ENCODE measurements at regions of chr22 and their contacts with region 1.

Region 1: GRCh38 chr22:18077639-18078328 is at the start of gene PEX26:
- DNase-seq: peak; percentile 98

Region 2: DNA sequence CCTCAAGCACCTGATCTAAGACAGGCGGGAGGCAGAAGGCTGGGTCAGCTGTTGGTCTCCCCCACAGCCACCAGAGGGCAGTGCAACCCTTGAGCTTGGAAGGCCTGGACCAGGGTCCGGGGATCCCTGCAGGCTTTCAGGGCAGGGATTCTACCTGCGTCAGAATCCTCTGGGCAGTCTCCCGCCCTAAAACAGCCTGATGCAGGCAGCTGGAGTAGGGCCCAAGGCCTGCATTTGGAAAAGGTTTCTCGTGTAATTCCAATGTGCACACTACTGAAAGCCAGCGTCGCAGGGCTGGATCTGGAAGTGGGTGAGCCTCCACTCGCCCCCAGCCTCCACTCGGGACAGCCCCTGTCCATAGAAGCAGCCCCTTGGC is 335.3 kb before region 1 on chr22:
- in situ Hi-C with region 1: no loop called
- DNase-seq: peak; percentile 68

Region 3: GRCh38 chr22:17807578-17808360 is 270.0 kb before region 1 on chr22:
- in situ Hi-C with region 1: no loop called
- DNase-seq: no peak

Region 4: DNA sequence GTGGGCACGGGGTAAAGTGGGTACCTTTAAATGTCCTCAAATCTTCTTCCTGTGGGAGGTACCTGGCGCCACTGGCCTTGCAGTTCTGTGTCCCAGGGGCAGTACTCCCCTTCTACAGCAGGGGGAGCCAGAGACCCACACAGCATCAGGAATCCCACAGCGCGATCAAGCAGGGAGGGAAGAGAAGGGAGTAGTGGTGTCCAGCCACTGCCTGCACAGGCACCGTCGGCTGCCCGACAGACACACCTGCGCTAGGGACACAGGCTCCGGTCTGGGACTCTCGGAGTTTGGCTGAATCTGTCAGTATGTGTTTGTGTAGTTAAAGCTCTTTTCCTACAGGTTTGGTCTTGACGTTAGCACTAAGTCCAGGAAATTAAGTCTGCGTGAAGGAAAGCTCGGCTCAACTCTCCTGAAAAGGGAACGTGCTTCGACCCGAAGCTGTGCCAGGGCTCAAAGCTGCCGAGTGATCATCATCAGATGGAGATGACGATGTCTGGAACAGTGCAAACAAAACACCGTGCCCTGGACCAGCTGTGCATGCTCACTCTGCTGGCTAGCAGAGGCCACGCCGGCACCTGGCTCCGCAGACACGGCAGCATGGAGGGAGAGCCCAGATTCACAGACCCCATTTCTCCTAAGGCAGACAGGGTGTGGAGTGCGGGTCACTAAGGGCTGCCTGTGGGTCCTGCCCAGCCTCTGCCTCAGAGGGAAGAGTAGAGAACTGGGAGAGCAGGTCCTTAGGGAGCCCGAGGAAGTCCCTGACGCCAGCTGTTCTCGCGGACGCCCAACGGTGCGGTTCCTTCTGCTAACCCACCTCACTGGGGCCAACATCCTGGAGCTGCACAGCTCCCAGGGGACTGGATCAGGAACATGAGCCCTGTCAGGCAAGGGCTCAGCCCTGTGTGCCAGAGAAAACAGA is 247.5 kb before region 1 on chr22:
- in situ Hi-C with region 1: loop called (anchors 10 kb)
- DNase-seq: peak; percentile 88

Region 5: GRCh38 chr22:18024276-18024947 is 53.4 kb before region 1 on chr22 and contains the start of gene MICAL3:
- in situ Hi-C with region 1: no loop called
- DNase-seq: peak; percentile 68

Region 6: DNA sequence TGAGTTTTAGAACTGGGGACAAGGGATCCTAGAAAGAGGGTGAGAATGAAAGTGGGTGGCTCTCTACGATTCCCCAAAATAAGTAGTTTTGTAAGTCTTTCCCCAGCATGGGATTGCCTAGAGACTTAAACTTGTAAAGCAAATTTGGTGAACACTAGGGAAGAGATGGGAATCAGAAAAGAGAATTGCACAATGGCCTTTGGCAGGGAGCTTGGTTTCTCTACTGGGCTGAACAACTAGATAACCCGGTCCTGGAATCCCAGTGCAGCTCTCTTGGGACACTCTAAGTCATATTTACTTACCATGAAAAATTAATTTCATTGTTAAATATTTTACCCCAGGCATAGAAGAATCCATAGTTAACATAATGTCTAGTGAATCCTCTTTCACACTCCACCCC is 55.7 kb after region 1 on chr22:
- in situ Hi-C with region 1: no loop called
- DNase-seq: no peak